PC-3 (cell line): ENCODE measurements at regions of chr1 and their contacts with region 1.

Region 1: DNA sequence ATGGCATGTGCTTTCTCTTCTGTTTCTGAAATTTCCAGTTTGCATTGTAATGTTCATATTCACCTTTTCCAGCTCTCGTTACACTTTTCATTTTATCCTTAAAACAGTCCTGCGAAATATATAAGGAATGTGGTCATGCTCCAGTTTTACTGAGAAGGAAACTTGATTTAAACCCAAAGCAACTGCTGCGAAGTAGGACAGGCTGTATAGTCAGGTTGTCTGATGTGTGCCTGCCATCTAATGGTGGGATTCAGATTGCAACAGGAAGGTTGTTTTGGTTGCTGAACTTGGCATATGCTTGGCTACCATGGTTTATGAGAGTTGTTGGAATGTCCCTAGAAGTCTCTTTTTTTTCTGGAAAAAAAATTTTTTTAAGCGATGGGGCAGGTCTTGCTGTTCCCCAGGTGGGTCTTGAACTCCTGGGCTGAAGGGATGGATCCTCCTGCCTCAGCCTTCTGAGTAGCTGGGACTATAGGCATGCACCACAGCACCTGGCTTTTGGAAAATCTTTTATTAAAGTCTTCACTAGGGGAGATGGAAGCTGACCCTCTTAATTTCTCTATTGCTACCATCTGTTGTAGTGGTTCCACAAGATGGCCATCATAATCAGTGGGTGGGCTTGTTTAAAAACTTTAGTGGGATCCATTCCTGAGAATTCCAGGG is 86.9 kb downstream of the UCK2 start:
- DNase-seq: peak; percentile 91
- ATAC-seq: peak; percentile 88
- H3K4me3 ChIP-seq: no peak overlapping the region
- H3K27ac ChIP-seq: no peak overlapping the region
- H3K4me1 ChIP-seq: no peaks in the 10 kb centered on the region
- H3K27me3 ChIP-seq: no peaks in the 10 kb centered on the region
- CTCF ChIP-seq: peak; percentile 98

Region 2: GRCh38 chr1:165392634-165393571 is 521.4 kb before region 1 on chr1:
- CTCF ChIA-PET with region 1: no interaction called
- POLR2A ChIA-PET with region 1: no interaction called
- intact Hi-C with region 1: loop called (anchors 10 kb)
- DNase-seq: peak; percentile 93
- ATAC-seq: peak; percentile 95
- H3K4me3 ChIP-seq: no peak overlapping the region
- H3K27ac ChIP-seq: no peak overlapping the region
- H3K4me1 ChIP-seq: peaks cover 8% of the 10 kb centered on the region
- H3K27me3 ChIP-seq: peaks cover 42% of the 10 kb centered on the region
- CTCF ChIP-seq: peak; percentile 98

Region 3: DNA sequence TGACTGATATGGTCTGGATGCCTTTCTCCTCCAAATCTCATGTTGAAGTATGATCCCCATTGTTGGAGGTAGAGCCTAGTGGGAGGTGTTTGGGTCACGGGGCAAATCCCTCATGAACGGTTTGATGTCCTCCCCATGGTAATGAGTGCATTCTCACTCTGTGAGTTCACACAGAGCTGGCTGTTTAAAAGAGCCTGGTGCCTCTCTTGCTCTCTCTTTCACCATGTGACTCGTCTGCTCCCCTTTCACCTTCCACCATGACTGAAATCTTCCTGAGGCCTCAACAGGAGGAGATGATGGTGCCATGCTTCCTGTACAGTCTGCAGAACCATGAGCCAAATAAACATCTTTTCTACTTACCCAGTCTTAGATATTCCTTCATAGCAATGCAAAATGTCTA is 246.1 kb before region 1 on chr1:
- CTCF ChIA-PET with region 1: no interaction called
- POLR2A ChIA-PET with region 1: no interaction called
- intact Hi-C with region 1: no loop called
- DNase-seq: no peak
- ATAC-seq: no peak
- H3K4me3 ChIP-seq: no peak overlapping the region
- H3K27ac ChIP-seq: no peak overlapping the region
- H3K4me1 ChIP-seq: no peaks in the 10 kb centered on the region
- H3K27me3 ChIP-seq: no peaks in the 10 kb centered on the region
- CTCF ChIP-seq: no peak

Region 4: GRCh38 chr1:165717918-165718515 is 196.2 kb before region 1 on chr1:
- CTCF ChIA-PET with region 1: no interaction called
- POLR2A ChIA-PET with region 1: no interaction called
- intact Hi-C with region 1: loop called (anchors 1 kb)
- DNase-seq: peak; percentile 82
- ATAC-seq: peak; percentile 92
- H3K4me3 ChIP-seq: no peak overlapping the region
- H3K27ac ChIP-seq: no peak overlapping the region
- H3K4me1 ChIP-seq: no peaks in the 10 kb centered on the region
- H3K27me3 ChIP-seq: no peaks in the 10 kb centered on the region
- CTCF ChIP-seq: peak; percentile 94

Region 5: GRCh38 chr1:165768513-165769394 is 145.5 kb before region 1 on chr1 and contains the start of gene TMCO1:
- CTCF ChIA-PET with region 1: no interaction called
- POLR2A ChIA-PET with region 1: interaction called, 3 read pairs
- intact Hi-C with region 1: loop called (anchors 1 kb)
- DNase-seq: peak; percentile 99
- ATAC-seq: peak; percentile 97
- H3K4me3 ChIP-seq: peak within 1 kb of the TSS; percentile 91
- H3K27ac ChIP-seq: peak within 1 kb of the TSS; percentile 77
- H3K4me1 ChIP-seq: peaks cover 39% of the 10 kb centered on the region
- H3K27me3 ChIP-seq: no peaks in the 10 kb centered on the region
- CTCF ChIP-seq: no peak
- total RNA-seq, gene TMCO1: 63.7 and 80.6 TPM in 2 replicates